ENCODE measurements at regions of chr5 and their contacts with region 1.

Region 1: GRCh38 chr5:133111299-133111698 is 59.5 kb downstream of the HSPA4 start:
- DNase-seq: peak; percentile 69
- H3K4me3 Mint-ChIP-seq: no peak overlapping the region
- H3K27ac Mint-ChIP-seq: no peak overlapping the region
- H3K4me1 Mint-ChIP-seq: peaks cover 46% of the 10 kb centered on the region
- H3K27me3 Mint-ChIP-seq: peaks cover 2% of the 10 kb centered on the region

Region 2: GRCh38 chr5:133347039-133347438 is 235.7 kb after region 1 on chr5:
- intact Hi-C with region 1: loop called (anchors 1 kb)
- DNase-seq: no peak
- H3K4me3 Mint-ChIP-seq: no peak overlapping the region
- H3K27ac Mint-ChIP-seq: no peak overlapping the region
- H3K4me1 Mint-ChIP-seq: no peaks in the 10 kb centered on the region
- H3K27me3 Mint-ChIP-seq: peaks cover 11% of the 10 kb centered on the region

Region 3: GRCh38 chr5:133460172-133460758 is 349.0 kb after region 1 on chr5:
- intact Hi-C with region 1: loop called (anchors 1 kb)
- DNase-seq: peak; percentile 12
- H3K4me3 Mint-ChIP-seq: no peak overlapping the region
- H3K27ac Mint-ChIP-seq: no peak overlapping the region
- H3K4me1 Mint-ChIP-seq: no peaks in the 10 kb centered on the region
- H3K27me3 Mint-ChIP-seq: peaks cover 14% of the 10 kb centered on the region

Region 4: GRCh38 chr5:133868946-133869518 is 757.7 kb after region 1 on chr5:
- intact Hi-C with region 1: loop called (anchors 1 kb)
- DNase-seq: peak; percentile 57
- H3K4me3 Mint-ChIP-seq: no peak overlapping the region
- H3K27ac Mint-ChIP-seq: peak overlapping the region; percentile 35
- H3K4me1 Mint-ChIP-seq: peaks cover 28% of the 10 kb centered on the region
- H3K27me3 Mint-ChIP-seq: no peaks in the 10 kb centered on the region